Activated CD4-positive, alpha-beta T cell treated with anti-CD3 and anti-CD28 coated beads for 36 hours (primary cell): ENCODE measurements at regions of chr11 and their contacts with region 1.

Region 1: GRCh38 chr11:10307442-10308207 is 2.8 kb downstream of the ADM start:
- DNase-seq: peak; percentile 95
- ATAC-seq: peak; percentile 75
- H3K4me3 Mint-ChIP-seq: peak overlapping the region; percentile 77
- H3K27ac Mint-ChIP-seq: peak overlapping the region; percentile 96
- H3K4me1 Mint-ChIP-seq: peaks cover 50% of the 10 kb centered on the region
- H3K27me3 Mint-ChIP-seq: peaks cover 49% of the 10 kb centered on the region

Region 2: GRCh38 chr11:9003573-9004309 is 1303.9 kb before region 1 on chr11 and contains the start of gene NRIP3:
- CTCF ChIA-PET with region 1: no interaction called
- POLR2A ChIA-PET with region 1: no interaction called
- intact Hi-C with region 1: loop called in 1 of 2 experiments (anchors 5 kb)
- DNase-seq: peak; percentile 82
- ATAC-seq: peak; percentile 41
- H3K4me3 Mint-ChIP-seq: peak within 1 kb of the TSS; percentile 65
- H3K27ac Mint-ChIP-seq: peak within 1 kb of the TSS; percentile 38
- H3K4me1 Mint-ChIP-seq: peaks cover 27% of the 10 kb centered on the region
- H3K27me3 Mint-ChIP-seq: peaks cover 34% of the 10 kb centered on the region
- total RNA-seq, gene NRIP3: 2.1 to 2.2 TPM

Region 3: DNA sequence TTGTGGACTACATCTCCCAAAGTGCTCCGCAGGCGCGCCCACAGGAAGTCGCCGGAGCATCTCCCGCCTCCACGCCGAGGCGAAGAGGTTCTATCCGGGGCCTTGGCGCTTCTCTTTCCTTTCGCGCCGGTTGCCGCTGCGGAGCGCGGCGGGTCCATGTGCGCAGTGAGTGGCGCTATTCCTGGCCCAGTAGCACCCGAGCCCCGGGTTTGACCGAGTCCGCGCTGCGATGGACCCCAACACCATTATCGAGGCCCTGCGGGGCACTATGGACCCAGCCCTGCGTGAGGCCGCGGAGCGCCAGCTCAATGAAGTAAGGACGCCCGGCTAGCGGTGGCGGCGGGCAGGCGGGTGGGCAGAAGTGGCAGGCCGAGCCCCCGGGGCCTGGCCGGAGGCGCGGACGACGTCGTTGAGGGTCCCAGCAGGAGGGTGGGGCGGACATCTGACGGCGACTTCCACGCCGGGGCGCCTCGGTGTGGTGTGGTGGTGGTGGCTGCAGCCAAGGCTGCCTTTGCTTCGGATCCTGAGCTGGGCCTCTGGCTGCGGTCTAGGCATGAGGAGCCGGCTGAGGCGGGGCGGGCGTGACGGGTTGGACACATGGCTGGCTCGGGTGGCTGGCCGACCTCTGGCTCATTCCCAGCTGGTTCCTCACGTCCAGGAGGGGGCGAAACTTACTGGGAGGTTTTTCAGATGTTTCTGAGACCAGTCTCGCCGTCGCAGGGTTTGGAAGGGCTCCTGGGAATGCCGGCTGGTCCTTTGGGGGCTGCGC is 922.9 kb before region 1 on chr11 and contains the start of gene IPO7:
- CTCF ChIA-PET with region 1: no interaction called
- POLR2A ChIA-PET with region 1: no interaction called
- intact Hi-C with region 1: loop called in 1 of 2 experiments (anchors 10 kb)
- DNase-seq: peak; percentile 96
- ATAC-seq: peak; percentile 98
- H3K4me3 Mint-ChIP-seq: peak within 1 kb of the TSS; percentile 96
- H3K27ac Mint-ChIP-seq: peak within 1 kb of the TSS; percentile 96
- H3K4me1 Mint-ChIP-seq: peaks cover 26% of the 10 kb centered on the region
- H3K27me3 Mint-ChIP-seq: no peaks in the 10 kb centered on the region
- total RNA-seq, gene IPO7: 155 to 181 TPM

Region 4: DNA sequence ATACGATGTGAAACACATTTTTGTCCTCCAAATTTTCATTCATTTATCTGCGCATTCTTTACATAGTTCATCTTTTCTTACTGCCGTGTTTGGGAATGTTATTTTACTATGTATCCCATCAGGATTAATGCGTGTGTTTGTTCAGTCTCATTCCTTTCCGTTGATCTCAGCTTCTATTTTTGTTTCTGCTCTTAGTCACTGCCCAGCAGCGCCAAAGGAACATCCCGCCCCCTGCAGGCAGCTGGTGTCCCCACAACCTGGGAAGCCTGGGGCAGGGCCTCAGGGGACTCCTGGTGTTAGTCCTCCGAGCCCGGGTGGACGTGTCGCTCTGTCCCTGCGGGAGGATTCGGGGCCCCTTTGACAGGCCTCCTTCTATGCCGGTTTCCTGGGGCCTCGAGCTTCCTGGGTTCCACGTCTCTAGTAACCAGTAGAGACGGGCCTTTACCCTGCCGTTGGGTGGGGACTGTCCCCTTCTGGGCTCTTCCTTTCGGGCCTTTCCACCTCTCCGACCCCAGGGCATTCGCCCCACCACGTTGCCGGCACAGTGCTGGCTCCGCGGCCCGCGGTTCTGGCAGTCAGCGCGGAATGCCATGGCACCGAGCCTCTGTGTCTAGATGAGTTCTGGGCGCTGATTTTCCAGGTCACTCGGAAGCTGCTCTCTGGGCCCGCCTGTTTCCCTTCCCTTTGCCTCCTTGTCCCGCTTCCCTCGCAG is 694.4 kb before region 1 on chr11:
- CTCF ChIA-PET with region 1: interaction called, 4 read pairs
- POLR2A ChIA-PET with region 1: no interaction called
- intact Hi-C with region 1: loop called (anchors 2 to 5 kb)
- DNase-seq: peak; percentile 94
- ATAC-seq: peak; percentile 64
- H3K4me3 Mint-ChIP-seq: peak overlapping the region; percentile 76
- H3K27ac Mint-ChIP-seq: peak overlapping the region; percentile 98
- H3K4me1 Mint-ChIP-seq: peaks cover 46% of the 10 kb centered on the region
- H3K27me3 Mint-ChIP-seq: no peaks in the 10 kb centered on the region

Region 5: DNA sequence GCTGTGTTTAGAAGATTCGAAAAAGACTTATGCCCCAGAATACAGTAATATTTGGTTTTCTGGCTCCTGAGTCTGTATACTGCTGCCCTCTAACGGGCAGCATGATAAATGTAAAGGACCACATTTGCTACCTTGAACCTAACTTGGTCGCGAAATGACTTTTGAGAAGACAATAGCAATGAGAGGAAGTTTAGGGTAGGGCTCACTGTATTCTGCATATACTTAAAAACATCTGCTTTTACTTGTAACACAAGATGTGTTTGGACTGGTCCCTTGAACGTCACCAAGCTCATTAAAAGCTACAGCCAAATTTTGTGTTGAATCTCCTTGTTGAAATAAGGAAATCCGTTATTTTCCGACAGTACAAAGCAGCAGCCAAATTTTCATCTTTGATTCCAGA is 334.6 kb before region 1 on chr11:
- CTCF ChIA-PET with region 1: interaction called, 6 read pairs
- POLR2A ChIA-PET with region 1: no interaction called
- intact Hi-C with region 1: loop called (anchors 5 kb)
- DNase-seq: peak; percentile 37
- ATAC-seq: peak; percentile 78
- H3K4me3 Mint-ChIP-seq: no peak overlapping the region
- H3K27ac Mint-ChIP-seq: no peak overlapping the region
- H3K4me1 Mint-ChIP-seq: no peaks in the 10 kb centered on the region
- H3K27me3 Mint-ChIP-seq: no peaks in the 10 kb centered on the region

Region 6: GRCh38 chr11:10366568-10367370 is 59.1 kb after region 1 on chr11:
- CTCF ChIA-PET with region 1: interaction called, 3 read pairs
- POLR2A ChIA-PET with region 1: no interaction called
- intact Hi-C with region 1: loop called in 1 of 2 experiments (anchors 2 kb)
- DNase-seq: peak; percentile 84
- ATAC-seq: peak; percentile 95
- H3K4me3 Mint-ChIP-seq: peak overlapping the region; percentile 5
- H3K27ac Mint-ChIP-seq: peak overlapping the region; percentile 41
- H3K4me1 Mint-ChIP-seq: peaks cover 11% of the 10 kb centered on the region
- H3K27me3 Mint-ChIP-seq: peaks cover 7% of the 10 kb centered on the region

Region 7: DNA sequence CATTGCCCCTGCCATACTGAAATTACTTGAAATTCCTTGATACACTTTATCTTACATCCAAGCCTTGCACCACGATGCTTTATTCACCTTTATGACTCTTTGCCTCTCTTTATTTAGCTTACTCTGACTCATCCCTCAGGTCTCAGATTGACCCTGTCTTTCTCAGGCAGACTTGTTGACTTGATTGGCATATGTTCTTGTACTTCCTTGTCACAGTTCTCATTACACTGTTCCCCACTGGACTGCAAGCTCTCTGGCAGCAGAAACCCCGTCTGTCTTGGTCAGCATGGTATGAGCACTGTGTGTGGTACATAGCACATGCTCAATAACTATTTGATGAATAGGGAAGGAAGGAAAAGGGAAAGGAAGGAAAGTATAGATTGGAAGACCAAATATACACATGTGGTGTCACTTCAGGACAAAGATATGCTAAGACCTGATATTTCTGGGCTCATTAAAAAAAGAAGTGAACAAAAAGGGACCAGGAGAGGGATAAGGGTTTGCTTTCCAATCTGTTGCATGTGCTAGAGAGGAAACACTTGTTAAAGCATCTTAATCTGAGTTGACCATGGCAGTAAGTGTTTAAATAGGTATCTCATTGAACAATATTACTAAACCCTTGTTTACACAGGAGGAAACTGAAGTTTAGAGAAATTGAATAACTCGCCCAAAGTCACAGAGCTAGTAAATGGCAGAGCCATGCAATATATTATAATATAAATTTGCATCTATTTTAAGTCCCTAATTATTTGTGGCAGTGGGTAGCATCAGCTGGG is 253.6 kb after region 1 on chr11:
- CTCF ChIA-PET with region 1: no interaction called
- POLR2A ChIA-PET with region 1: no interaction called
- intact Hi-C with region 1: no loop called
- DNase-seq: no peak
- ATAC-seq: no peak
- H3K4me3 Mint-ChIP-seq: no peak overlapping the region
- H3K27ac Mint-ChIP-seq: no peak overlapping the region
- H3K4me1 Mint-ChIP-seq: no peaks in the 10 kb centered on the region
- H3K27me3 Mint-ChIP-seq: no peaks in the 10 kb centered on the region

Region 8: GRCh38 chr11:10857709-10858438 is 550.2 kb after region 1 on chr11 and contains the start of gene ZBED5:
- CTCF ChIA-PET with region 1: no interaction called
- POLR2A ChIA-PET with region 1: no interaction called
- intact Hi-C with region 1: loop called in 1 of 2 experiments (anchors 5 kb)
- DNase-seq: peak; percentile 98
- ATAC-seq: peak; percentile 93
- H3K4me3 Mint-ChIP-seq: peak within 1 kb of the TSS; percentile 100
- H3K27ac Mint-ChIP-seq: peak within 1 kb of the TSS; percentile 100
- H3K4me1 Mint-ChIP-seq: peaks cover 40% of the 10 kb centered on the region
- H3K27me3 Mint-ChIP-seq: no peaks in the 10 kb centered on the region
- total RNA-seq, gene ZBED5: 34.1 to 44.3 TPM